Naive thymus-derived CD4-positive, alpha-beta T cell (primary cell): ENCODE measurements at regions of chr11 and their contacts with region 1.

Region 1: DNA sequence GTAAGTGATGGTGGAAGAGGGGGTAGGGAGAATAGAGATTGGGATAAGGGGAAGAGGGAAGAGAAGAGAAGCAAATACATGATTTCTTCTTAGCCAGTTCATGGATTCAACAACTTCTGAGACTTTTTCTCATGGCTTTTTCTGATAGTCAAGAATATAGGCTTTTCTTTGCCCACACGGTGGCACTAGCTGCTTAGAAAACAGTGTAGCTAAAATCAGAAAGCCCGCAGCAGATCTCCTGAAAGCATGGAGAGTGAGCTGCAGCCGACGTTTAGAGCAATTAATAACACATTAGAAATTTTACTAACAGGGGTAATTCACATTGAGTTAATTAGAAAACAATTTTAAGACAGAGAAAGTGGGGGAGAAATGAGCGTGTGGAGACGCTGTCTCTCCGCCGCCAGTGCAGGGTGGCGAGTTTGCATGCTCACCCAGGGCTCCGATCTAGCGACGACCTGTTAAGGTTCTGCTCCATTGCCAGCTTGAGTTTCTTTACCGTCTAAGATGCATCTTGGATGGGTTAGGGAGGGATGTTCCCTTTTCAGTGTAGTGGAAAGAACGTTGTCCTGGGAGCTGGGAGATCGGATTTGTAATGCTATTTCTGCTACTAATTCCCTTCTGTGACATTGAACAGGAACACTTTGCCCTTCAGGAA is 3.3 kb upstream of the RAG1 start:
- DNase-seq: peak in 7 of 9 donors; percentile 7 to 55 (median 33)
- ATAC-seq: peak; percentile 75
- H3K4me3 ChIP-seq: no peak overlapping the region
- H3K4me3 Mint-ChIP-seq: peak overlapping the region; percentile 27 to 87 (median 75)
- H3K27ac ChIP-seq: no peak overlapping the region
- H3K27ac Mint-ChIP-seq: no peak overlapping the region
- H3K4me1 ChIP-seq: peaks cover 0 to 7% of the 10 kb centered on the region in 2 donors
- H3K4me1 Mint-ChIP-seq: peaks cover 4 to 14% (median 6%) of the 10 kb centered on the region in 7 donors
- H3K27me3 ChIP-seq: no peaks in the 10 kb centered on the region
- H3K27me3 Mint-ChIP-seq: peaks cover 24 to 65% (median 34%) of the 10 kb centered on the region in 5 donors

Region 2: GRCh38 chr11:36631774-36632173 is 67.3 kb after region 1 on chr11:
- CTCF ChIA-PET with region 1: no interaction called
- POLR2A ChIA-PET with region 1: no interaction called
- intact Hi-C with region 1: no loop called
- DNase-seq: no peak
- ATAC-seq: no peak
- H3K4me3 ChIP-seq: no peak overlapping the region
- H3K4me3 Mint-ChIP-seq: peak overlapping the region in 1 of 10 donors; percentile 31
- H3K27ac ChIP-seq: no peak overlapping the region
- H3K27ac Mint-ChIP-seq: peak overlapping the region in 1 of 9 donors; percentile 34
- H3K4me1 ChIP-seq: no peaks in the 10 kb centered on the region
- H3K4me1 Mint-ChIP-seq: peaks cover 0 to 3% (median 0%) of the 10 kb centered on the region in 7 donors
- H3K27me3 ChIP-seq: no peaks in the 10 kb centered on the region
- H3K27me3 Mint-ChIP-seq: peaks cover 0 to 6% (median 3%) of the 10 kb centered on the region in 5 donors

Region 3: GRCh38 chr11:36672813-36673450 is 108.4 kb after region 1 on chr11:
- CTCF ChIA-PET with region 1: interaction called, 4 read pairs
- POLR2A ChIA-PET with region 1: no interaction called
- intact Hi-C with region 1: loop called in 1 of 2 experiments (anchors 1 kb)
- DNase-seq: peak in 6 of 9 donors; percentile 8 to 43 (median 20)
- ATAC-seq: no peak
- H3K4me3 ChIP-seq: no peak overlapping the region
- H3K4me3 Mint-ChIP-seq: no peak overlapping the region
- H3K27ac ChIP-seq: no peak overlapping the region
- H3K27ac Mint-ChIP-seq: no peak overlapping the region
- H3K4me1 ChIP-seq: no peaks in the 10 kb centered on the region
- H3K4me1 Mint-ChIP-seq: no peaks in the 10 kb centered on the region
- H3K27me3 ChIP-seq: no peaks in the 10 kb centered on the region
- H3K27me3 Mint-ChIP-seq: peaks cover 0 to 33% (median 21%) of the 10 kb centered on the region in 5 donors